ENCODE measurements at regions of chr9 and their contacts with region 1.

Region 1: DNA sequence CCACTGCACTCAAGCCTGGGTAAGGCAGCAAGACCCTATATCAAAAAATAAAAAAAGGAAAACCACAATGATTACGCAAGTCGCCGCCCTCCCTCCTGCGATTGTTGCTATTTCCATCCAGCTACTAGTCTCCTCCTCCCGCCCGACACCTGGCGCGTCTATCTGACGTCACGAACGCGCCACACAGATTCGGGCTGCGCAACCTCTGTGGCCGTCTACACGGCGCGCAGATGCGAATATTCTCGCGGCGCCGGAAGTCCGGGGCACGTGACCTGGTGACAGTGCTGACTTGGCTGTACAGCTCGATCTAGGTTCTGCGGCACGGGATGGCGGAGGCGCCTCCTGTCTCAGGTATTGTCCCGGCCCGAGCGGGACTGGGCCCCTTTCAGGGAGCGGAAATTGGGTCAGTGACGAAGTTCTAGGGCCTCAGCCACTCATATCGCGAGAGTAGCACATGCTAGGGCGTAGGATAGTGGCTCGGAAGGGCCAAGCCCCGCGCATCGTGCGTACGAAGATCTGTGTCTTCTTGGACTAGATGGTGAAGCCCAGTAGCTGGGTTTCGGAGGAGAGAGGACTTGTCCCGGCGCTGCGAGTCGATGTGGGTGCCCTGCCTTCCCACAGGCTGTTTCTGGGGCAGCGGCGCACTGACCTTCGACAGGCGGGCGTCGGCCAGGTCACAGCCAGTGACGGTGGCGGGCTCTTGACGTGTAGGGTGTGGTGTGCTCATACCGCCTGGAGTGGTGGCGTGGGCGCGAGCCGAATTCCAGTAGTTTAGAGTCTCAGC is at the start of gene NFX1:
- DNase-seq: peak; percentile 99
- H3K4me3 ChIP-seq: peak within 1 kb of the TSS; percentile 75 to 83 (median 82)
- H3K27ac ChIP-seq: peak within 1 kb of the TSS; percentile 100
- H3K4me1 ChIP-seq: peaks cover 23% of the 10 kb centered on the region
- H3K27me3 ChIP-seq: no peaks in the 10 kb centered on the region
- CTCF ChIP-seq: no peak
- total RNA-seq, gene NFX1: 29.8 to 47.2 TPM

Region 2: DNA sequence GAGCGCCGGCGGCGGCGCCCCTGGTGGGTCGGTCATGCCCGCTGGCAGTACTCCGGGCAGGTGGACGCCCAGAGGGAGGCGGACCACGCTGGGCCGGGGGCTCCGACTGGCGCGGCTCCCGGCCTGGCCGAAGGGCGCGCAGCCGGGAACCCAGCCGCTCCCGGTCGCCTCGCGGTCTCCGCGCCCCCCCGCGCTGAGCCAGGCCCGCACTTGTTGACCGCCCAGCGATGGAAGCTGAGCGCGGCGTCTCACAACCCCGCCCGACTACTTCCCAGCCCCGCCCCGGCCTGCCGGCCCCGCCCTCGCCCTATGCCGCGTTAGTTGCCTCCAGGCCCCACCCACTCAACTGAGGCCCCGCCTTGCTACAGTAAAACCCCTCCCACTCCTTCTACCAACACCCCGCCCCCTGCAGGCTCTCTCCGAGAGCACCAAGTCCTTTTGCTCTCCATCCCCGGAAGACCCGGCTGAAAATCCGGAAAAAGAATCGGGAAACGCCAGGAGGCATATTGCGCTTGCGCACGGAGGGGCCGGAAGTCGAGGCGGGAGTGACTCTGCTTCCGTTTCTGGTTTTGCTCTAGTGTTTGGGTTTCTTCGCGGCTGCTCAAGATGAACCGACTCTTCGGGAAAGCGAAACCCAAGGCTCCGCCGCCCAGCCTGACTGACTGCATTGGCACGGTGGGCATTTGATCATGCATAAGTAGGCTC is 25.8 kb before region 1 on chr9 and contains the starts of genes BAG1 and CHMP5:
- CTCF ChIA-PET with region 1: interaction called, 6 read pairs
- dilution Hi-C with region 1: no loop called
- in situ Hi-C with region 1: no loop called
- intact Hi-C with region 1: loop called (anchors 1 kb)
- DNase-seq: peak; percentile 99
- H3K4me3 ChIP-seq: peak within 1 kb of the TSS; percentile 89 to 97 (median 96)
- H3K27ac ChIP-seq: peak within 1 kb of the TSS; percentile 87
- H3K4me1 ChIP-seq: peaks cover 17% of the 10 kb centered on the region
- H3K27me3 ChIP-seq: no peaks in the 10 kb centered on the region
- CTCF ChIP-seq: peak; percentile 11 to 45
- total RNA-seq, gene BAG1: 28.5 to 30.9 TPM
- total RNA-seq, gene CHMP5: 52.7 to 54.0 TPM

Region 3: DNA sequence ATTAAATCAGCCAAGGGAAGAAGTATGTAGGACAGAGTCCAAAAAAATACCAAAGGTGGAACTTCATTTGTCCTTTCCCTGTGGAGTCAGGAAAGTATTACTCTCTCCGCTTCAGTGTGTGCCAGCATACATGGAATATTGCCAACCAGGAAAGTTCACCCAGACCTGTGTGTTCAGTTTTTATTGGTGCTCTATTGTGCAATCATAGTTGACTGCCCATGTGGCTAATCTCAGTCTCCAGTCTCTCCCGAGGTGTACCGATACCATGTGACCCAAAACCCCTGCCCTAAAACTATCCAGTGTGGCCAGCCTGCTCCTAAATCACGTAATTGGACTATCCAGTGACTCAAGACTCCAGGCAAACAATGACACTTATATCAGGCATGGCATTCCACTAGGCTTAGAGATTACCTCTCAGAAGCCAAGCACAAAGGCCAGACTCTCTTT is 38.7 kb after region 1 on chr9:
- CTCF ChIA-PET with region 1: no interaction called
- dilution Hi-C with region 1: no loop called
- in situ Hi-C with region 1: no loop called
- intact Hi-C with region 1: loop called (anchors 1 kb)
- DNase-seq: peak; percentile 98
- H3K4me3 ChIP-seq: no peak overlapping the region
- H3K27ac ChIP-seq: peak overlapping the region; percentile 72
- H3K4me1 ChIP-seq: peaks cover 16% of the 10 kb centered on the region
- H3K27me3 ChIP-seq: no peaks in the 10 kb centered on the region
- CTCF ChIP-seq: no peak

Region 4: GRCh38 chr9:33393581-33393980 is 103.1 kb after region 1 on chr9:
- CTCF ChIA-PET with region 1: no interaction called
- dilution Hi-C with region 1: no loop called
- in situ Hi-C with region 1: no loop called
- intact Hi-C with region 1: no loop called
- DNase-seq: no peak
- H3K4me3 ChIP-seq: no peak overlapping the region
- H3K27ac ChIP-seq: no peak overlapping the region
- H3K4me1 ChIP-seq: no peaks in the 10 kb centered on the region
- H3K27me3 ChIP-seq: no peaks in the 10 kb centered on the region
- CTCF ChIP-seq: no peak

Region 5: GRCh38 chr9:33473643-33474352 is 183.4 kb after region 1 on chr9 and contains the start of gene NOL6:
- CTCF ChIA-PET with region 1: no interaction called
- dilution Hi-C with region 1: no loop called
- in situ Hi-C with region 1: loop called in 1 of 2 experiments (anchors 25 kb)
- intact Hi-C with region 1: no loop called
- DNase-seq: peak; percentile 99
- H3K4me3 ChIP-seq: peak within 1 kb of the TSS; percentile 80 to 96 (median 93)
- H3K27ac ChIP-seq: peak within 1 kb of the TSS; percentile 65
- H3K4me1 ChIP-seq: peaks cover 17% of the 10 kb centered on the region
- H3K27me3 ChIP-seq: no peaks in the 10 kb centered on the region
- CTCF ChIP-seq: no peak
- total RNA-seq, gene NOL6: 34.2 to 59.0 TPM

Region 6: GRCh38 chr9:33721674-33722358 is 431.4 kb after region 1 on chr9:
- CTCF ChIA-PET with region 1: no interaction called
- dilution Hi-C with region 1: no loop called
- in situ Hi-C with region 1: no loop called
- intact Hi-C with region 1: loop called (anchors 2 kb)
- DNase-seq: peak; percentile 65
- H3K4me3 ChIP-seq: no peak overlapping the region
- H3K27ac ChIP-seq: no peak overlapping the region
- H3K4me1 ChIP-seq: no peaks in the 10 kb centered on the region
- H3K27me3 ChIP-seq: no peaks in the 10 kb centered on the region
- CTCF ChIP-seq: peak; percentile 99 to 100